Mammary epithelial cell (primary cell): ENCODE measurements at regions of chr20 and their contacts with region 1.

Region 1: DNA sequence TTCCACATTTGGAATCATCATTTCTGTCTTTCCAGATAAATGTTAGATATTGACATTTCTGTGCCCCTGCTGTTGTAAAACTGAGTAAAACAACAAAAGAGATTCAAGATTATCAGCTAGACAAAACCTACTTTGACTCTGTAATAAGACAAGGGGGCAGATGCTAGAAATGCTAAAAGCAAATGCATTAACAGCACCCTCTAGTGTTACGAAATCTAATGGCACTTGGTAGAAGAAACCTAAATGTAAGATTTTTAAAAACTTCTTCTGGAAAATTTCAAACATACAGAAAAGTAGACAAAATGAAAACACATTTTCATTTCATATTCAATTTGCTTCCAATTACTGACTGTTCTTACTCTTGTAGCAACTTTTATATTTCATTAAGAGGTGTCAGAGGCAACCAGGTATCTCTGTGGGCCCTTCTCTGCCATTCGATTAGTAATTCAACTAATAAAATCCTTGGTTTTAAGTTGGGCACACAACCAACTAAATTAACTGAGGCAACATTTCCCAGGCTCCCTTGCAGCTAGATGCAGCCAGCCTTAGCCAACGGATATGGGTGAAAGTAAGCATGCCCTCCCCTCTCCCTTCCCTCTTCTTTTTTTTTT is 45.0 kb downstream of the SLC23A2 start:
- DNase-seq: peak; percentile 34
- H3K4me3 ChIP-seq: no peak overlapping the region
- H3K27ac ChIP-seq: no peak overlapping the region
- H3K4me1 ChIP-seq: peaks cover 6% of the 10 kb centered on the region
- H3K27me3 ChIP-seq: no peaks in the 10 kb centered on the region
- CTCF ChIP-seq: peak; percentile 81 to 90

Region 2: GRCh38 chr20:4886771-4887527 is 69.4 kb before region 1 on chr20:
- CTCF ChIA-PET with region 1: no interaction called
- dilution Hi-C with region 1: no loop called
- in situ Hi-C with region 1: no loop called
- intact Hi-C with region 1: no loop called
- DNase-seq: no peak
- H3K4me3 ChIP-seq: no peak overlapping the region
- H3K27ac ChIP-seq: no peak overlapping the region
- H3K4me1 ChIP-seq: no peaks in the 10 kb centered on the region
- H3K27me3 ChIP-seq: no peaks in the 10 kb centered on the region
- CTCF ChIP-seq: no peak

Region 3: DNA sequence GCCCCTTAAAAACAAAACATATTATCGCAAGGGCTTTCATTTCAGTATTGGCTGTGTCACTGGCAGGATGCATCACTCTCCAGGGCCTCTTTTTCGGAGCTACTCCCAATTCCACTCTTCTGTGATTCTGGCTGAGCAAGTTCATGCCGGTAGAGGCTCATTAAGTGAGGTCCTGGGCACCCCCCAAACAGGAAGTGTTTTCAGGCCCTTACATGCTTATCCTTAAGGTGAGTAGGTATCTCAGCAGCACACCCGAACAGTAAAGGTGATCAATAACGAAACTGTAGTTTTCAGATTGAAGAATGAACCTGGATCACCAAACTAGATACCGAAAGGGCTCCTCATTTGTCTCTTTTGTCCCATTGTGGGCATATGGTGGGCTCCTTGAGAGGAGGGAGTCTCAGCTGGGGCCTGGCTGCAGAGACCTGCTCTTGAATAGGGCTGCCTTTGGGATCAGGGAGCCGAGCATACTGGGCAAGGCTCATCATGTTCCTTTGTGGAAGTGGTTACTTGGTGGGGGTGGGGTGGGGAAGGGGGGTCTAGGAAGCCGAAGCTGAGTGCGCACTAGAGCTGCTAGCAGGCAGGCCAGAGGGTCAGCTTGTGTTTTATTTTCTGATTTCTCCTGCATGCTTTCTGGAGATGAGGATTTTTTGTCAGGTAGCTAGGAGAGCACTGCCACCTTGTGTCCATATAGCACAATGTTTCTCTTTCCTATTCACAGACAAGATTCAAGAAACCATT is 235.7 kb after region 1 on chr20:
- CTCF ChIA-PET with region 1: no interaction called
- dilution Hi-C with region 1: no loop called
- in situ Hi-C with region 1: no loop called
- intact Hi-C with region 1: loop called (anchors 10 kb)
- DNase-seq: peak; percentile 63
- H3K4me3 ChIP-seq: no peak overlapping the region
- H3K27ac ChIP-seq: no peak overlapping the region
- H3K4me1 ChIP-seq: peaks cover 4% of the 10 kb centered on the region
- H3K27me3 ChIP-seq: no peaks in the 10 kb centered on the region
- CTCF ChIP-seq: peak; percentile 63 to 70